ENCODE measurements at regions of chr3 and their contacts with region 1.

Region 1: DNA sequence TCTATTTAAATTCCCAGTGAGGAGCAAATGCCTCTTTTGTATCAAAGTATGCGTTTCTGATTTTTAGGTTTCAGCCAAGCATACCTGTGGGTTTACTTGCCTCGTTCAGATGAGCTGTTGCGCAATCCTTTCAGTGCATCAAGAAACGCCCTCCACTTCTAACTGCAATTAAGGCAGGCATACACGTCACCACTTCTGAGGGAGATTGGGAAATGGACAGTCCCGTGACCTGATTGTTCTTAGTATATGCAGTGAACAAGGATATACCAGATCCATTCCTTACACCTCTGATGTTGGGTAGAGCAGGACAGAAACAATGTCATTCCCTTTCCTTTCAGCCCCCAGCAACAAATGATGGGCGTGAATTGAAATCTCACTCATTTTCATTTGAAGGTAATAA is 219.0 kb downstream of the ITPR1 start:
- DNase-seq: no peak
- H3K4me3 Mint-ChIP-seq: no peak overlapping the region
- H3K27ac Mint-ChIP-seq: no peak overlapping the region
- H3K4me1 Mint-ChIP-seq: peaks cover 2% of the 10 kb centered on the region
- H3K27me3 Mint-ChIP-seq: no peaks in the 10 kb centered on the region

Region 2: DNA sequence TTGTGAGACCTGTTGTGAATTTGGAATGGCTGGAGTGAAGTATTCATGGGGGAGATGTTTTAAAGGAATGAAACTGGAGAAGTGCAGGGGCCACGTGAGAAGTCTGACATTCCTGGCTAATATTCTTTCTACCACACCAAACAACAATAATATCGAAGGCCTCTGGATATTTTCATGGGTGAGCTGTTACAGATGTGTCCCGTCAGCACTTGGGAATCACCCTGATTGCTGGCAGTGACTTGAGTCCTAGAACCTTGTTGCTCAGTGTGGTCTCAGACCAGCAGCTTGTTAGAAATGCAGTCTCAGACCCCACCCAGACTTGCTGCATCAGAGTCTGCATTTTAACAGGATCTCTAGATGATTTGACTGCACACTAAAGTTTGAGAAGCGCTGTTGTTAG is 105.2 kb before region 1 on chr3:
- CTCF ChIA-PET with region 1: no interaction called
- intact Hi-C with region 1: no loop called
- DNase-seq: no peak
- H3K4me3 Mint-ChIP-seq: no peak overlapping the region
- H3K27ac Mint-ChIP-seq: no peak overlapping the region
- H3K4me1 Mint-ChIP-seq: peaks cover 4% of the 10 kb centered on the region
- H3K27me3 Mint-ChIP-seq: no peaks in the 10 kb centered on the region

Region 3: GRCh38 chr3:4642611-4643010 is 69.5 kb before region 1 on chr3:
- CTCF ChIA-PET with region 1: no interaction called
- intact Hi-C with region 1: no loop called
- DNase-seq: no peak
- H3K4me3 Mint-ChIP-seq: no peak overlapping the region
- H3K27ac Mint-ChIP-seq: no peak overlapping the region
- H3K4me1 Mint-ChIP-seq: peaks cover 20% of the 10 kb centered on the region
- H3K27me3 Mint-ChIP-seq: no peaks in the 10 kb centered on the region

Region 4: GRCh38 chr3:4834403-4834866 is 122.3 kb after region 1 on chr3:
- CTCF ChIA-PET with region 1: interaction called, 10 read pairs
- intact Hi-C with region 1: no loop called
- DNase-seq: peak; percentile 84
- H3K4me3 Mint-ChIP-seq: peak overlapping the region; percentile 13
- H3K27ac Mint-ChIP-seq: peak overlapping the region; percentile 93
- H3K4me1 Mint-ChIP-seq: peaks cover 85% of the 10 kb centered on the region
- H3K27me3 Mint-ChIP-seq: no peaks in the 10 kb centered on the region

Region 5: GRCh38 chr3:4972652-4973643 is 260.8 kb after region 1 on chr3:
- CTCF ChIA-PET with region 1: interaction called, 48 read pairs
- intact Hi-C with region 1: loop called (anchors 1 kb)
- DNase-seq: no peak
- H3K4me3 Mint-ChIP-seq: no peak overlapping the region
- H3K27ac Mint-ChIP-seq: no peak overlapping the region
- H3K4me1 Mint-ChIP-seq: peaks cover 28% of the 10 kb centered on the region
- H3K27me3 Mint-ChIP-seq: no peaks in the 10 kb centered on the region

Region 6: DNA sequence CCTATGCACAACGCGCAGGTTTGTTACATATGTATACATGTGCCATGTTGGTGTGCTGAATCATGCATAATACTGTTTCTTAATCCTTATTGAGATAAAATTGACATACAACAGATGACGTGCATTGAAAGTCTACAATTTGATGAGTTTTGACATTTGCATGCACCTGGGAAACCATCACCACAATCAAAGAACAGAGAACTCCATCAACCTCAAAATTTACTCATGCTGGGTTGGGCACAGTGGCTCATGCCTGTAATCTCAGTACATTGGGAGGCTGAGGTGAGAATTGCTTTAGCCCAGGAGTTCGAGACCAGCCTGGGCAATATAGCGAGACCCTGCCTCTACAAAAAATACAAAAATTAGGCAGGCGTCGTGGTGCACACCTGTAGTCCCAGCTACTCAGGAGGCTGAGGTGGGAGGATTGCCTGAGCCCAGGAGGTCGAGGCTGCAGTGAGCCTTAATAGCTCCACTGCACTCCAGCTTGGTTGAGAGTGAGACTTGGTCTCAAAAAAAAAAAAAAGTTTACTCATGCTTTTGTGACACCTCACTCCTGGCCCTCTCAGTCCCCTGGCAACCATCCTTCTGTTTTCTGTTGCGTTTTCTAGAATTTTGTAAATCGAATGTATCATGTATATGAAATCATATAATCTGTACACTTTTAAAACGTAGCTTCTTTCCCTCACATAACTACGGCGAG is 323.7 kb after region 1 on chr3:
- CTCF ChIA-PET with region 1: interaction called, 48 read pairs
- intact Hi-C with region 1: no loop called
- DNase-seq: no peak
- H3K4me3 Mint-ChIP-seq: no peak overlapping the region
- H3K27ac Mint-ChIP-seq: no peak overlapping the region
- H3K4me1 Mint-ChIP-seq: peaks cover 7% of the 10 kb centered on the region
- H3K27me3 Mint-ChIP-seq: no peaks in the 10 kb centered on the region

Region 7: GRCh38 chr3:5063724-5064123 is 351.6 kb after region 1 on chr3:
- CTCF ChIA-PET with region 1: interaction called, 165 read pairs
- intact Hi-C with region 1: no loop called
- DNase-seq: no peak
- H3K4me3 Mint-ChIP-seq: no peak overlapping the region
- H3K27ac Mint-ChIP-seq: no peak overlapping the region
- H3K4me1 Mint-ChIP-seq: no peaks in the 10 kb centered on the region
- H3K27me3 Mint-ChIP-seq: no peaks in the 10 kb centered on the region

Region 8: GRCh38 chr3:5226783-5227182 is 514.6 kb after region 1 on chr3:
- CTCF ChIA-PET with region 1: no interaction called
- intact Hi-C with region 1: loop called (anchors 5 kb)
- DNase-seq: no peak
- H3K4me3 Mint-ChIP-seq: no peak overlapping the region
- H3K27ac Mint-ChIP-seq: no peak overlapping the region
- H3K4me1 Mint-ChIP-seq: no peaks in the 10 kb centered on the region
- H3K27me3 Mint-ChIP-seq: peaks cover 3% of the 10 kb centered on the region